ENCODE measurements at regions of chr1 and their contacts with region 1.

Region 1: DNA sequence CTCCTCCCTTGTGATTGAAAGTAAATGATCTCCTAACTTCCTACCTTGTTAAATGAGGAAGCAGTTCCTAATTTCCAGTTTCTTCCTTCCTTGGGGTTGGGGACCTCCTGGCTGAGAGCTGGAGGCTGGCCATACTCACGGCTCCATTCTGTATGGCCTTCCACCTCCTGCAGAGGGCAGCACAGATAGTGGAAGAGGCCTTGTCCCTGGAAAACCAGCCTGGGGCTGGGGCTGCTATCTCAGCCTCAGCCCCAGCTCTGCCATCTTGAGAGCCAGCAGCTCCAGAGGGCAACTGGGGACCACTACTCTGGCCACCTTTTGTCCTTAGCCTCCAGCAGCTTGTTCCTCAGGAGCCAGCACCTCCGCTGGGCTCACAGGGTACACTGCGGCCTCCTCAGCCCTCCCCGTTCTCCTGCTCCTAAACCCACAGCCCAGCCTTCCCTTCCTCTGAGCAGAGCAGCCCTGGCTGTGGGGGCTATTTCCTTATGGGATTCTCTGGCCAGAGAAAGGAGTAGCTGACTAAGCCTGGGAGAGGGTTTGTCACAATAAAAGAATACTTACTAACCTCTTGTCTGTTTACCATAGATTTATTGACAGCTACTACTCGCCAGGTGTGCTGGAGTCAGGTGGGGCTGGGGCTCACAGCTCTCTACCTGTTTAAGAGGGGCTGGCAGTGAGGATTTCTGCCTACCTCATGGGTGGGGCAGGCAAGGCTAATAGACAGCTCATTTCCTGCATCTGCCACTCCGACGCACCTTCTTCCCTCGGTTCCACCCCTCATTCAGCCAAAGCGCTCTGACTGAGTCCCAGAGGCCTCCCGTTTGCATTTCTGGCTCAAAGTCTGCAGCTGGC is 6.3 kb downstream of the TMEM234 start:
- DNase-seq: peak; percentile 71
- H3K27ac ChIP-seq: peak overlapping the region; percentile 70
- CTCF ChIP-seq: peak; percentile 82

Region 2: GRCh38 chr1:32186077-32186476 is 29.8 kb before region 1 on chr1:
- CTCF ChIA-PET with region 1: no interaction called
- POLR2A ChIA-PET with region 1: no interaction called
- DNase-seq: no peak
- H3K27ac ChIP-seq: peak overlapping the region; percentile 39
- CTCF ChIP-seq: no peak

Region 3: GRCh38 chr1:32205401-32206370 is 10.2 kb before region 1 on chr1 and contains the start of gene IQCC:
- CTCF ChIA-PET with region 1: interaction called, 11 read pairs
- POLR2A ChIA-PET with region 1: interaction called, 3 read pairs
- DNase-seq: peak; percentile 85
- H3K27ac ChIP-seq: peak within 1 kb of the TSS; percentile 65
- CTCF ChIP-seq: no peak

Region 4: DNA sequence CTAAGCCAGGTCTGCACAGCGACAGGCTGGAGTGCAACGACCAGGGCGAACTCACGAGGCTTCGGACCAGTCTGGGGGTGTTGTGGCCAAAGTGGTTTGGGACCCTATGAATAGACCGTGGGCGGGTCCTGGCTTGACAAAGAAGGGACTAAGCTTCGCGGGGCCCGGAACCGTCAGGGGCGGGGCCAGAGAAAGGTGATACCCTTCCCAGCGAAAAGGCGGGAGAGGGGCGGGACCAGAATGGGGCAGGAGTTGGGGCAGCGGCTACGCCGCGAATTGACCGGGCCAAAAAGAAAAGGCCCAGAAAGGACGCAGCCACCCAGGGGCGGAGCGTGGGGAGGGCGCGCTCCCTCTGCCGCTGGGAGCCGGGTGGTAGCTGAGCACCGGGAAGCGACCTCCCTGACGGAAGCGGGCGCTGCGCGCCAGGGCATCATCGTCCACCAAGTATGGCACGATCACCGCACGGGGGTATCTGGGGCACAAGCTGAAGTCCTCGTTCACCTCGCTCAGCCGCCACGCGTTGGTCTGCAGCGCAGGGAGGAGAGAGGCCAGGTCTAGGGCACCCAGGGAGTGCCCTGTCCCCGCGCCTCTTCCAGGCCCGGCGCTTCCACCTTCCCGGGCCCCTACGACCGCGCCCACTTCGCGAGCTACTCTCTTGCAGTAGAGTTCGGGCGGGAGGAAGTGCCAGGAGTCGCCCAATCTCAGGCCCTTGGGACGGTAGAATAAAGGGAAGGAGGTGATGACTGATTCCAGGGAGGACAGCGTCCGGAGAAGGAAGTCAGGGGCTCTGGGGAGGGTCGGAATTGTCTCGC is 24.5 kb after region 1 on chr1:
- CTCF ChIA-PET with region 1: interaction called, 18 read pairs
- POLR2A ChIA-PET with region 1: interaction called, 4 read pairs
- DNase-seq: peak; percentile 57
- H3K27ac ChIP-seq: peak overlapping the region; percentile 63
- CTCF ChIP-seq: peak; percentile 22; the same call in 1 of the 2 replicates

Region 5: DNA sequence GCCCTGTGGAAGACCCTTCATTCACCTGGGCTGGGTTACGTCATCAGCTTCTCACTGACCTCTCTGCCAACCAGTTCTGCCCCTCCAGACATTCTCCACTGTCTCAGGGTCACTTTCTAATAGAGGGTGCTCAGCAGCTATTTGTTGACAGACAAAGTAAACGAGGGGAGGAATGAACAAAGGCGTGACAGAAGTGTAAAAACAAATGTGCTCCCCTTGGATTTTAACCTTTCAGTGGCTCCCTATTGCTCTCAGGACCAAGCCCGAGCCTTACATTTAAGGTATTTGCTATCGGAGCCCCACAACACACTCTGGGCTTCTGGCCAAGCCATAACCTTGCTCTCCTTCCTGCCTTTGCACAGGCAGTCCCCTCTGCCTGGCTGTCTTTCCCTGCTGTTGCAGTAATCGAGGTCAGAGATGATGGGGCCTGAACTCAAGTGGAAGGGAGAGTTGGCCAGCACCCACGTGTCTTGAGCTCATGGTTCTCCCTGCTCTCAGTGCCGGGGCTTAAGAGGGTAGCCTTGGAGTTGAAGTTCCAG is 129.5 kb after region 1 on chr1:
- CTCF ChIA-PET with region 1: no interaction called
- POLR2A ChIA-PET with region 1: no interaction called
- DNase-seq: no peak
- H3K27ac ChIP-seq: no peak overlapping the region
- CTCF ChIP-seq: no peak

Region 6: DNA sequence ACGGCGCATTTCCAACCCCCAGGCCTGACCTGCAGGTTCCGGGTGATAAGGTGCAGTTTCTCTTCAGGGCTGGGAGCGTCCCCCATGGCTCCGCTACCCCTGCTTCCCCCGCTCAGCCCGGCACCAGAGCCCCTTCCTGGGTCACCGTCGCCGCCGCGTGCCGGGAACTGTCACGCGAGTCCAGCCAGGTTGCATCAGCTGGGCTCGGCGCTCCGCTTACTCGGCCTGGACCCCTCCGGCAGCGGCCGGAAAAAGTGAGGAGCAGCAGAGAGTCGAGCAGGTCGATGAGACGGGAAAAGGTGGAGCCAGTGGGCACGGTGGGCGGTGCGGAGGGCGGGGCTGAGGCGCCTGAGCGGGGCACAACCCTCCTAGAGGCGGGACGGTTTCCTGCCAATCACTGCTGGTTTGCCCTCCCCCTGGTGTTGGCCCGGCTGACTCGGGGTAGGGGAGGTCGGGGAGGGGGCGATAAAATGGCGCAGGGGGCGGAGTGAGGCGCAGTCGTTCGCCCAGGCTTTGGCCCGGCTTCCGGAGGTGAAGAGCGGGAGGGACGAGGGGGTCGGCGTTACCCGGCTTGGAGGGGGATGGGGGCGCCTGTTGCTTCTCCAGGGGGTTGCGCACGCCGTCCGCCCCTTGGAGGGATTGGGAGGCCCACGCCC is 601.4 kb after region 1 on chr1 and contains the starts of genes S100PBP and YARS1:
- CTCF ChIA-PET with region 1: no interaction called
- POLR2A ChIA-PET with region 1: interaction called, 10 read pairs
- DNase-seq: peak; percentile 100
- H3K27ac ChIP-seq: peak within 1 kb of the TSS; percentile 95
- CTCF ChIP-seq: no peak

Measured in RWPE1 (cell line).